Panc1 (cell line): ENCODE measurements at regions of chr1 and their contacts with region 1.

Region 1: GRCh38 chr1:236168716-236169429 is 26.5 kb downstream of the GPR137B start:
- DNase-seq: peak; percentile 92
- ATAC-seq: peak; percentile 76
- H3K4me3 ChIP-seq: no peak overlapping the region
- H3K27ac ChIP-seq: no peak overlapping the region
- H3K4me1 ChIP-seq: no peaks in the 10 kb centered on the region
- H3K27me3 ChIP-seq: no peaks in the 10 kb centered on the region
- CTCF ChIP-seq: no peak; the same call in 1 of the 2 replicates

Region 2: GRCh38 chr1:236156512-236157208 is 12.2 kb before region 1 on chr1:
- CTCF ChIA-PET with region 1: interaction called, 11 read pairs
- POLR2A ChIA-PET with region 1: no interaction called
- in situ Hi-C with region 1: no loop called
- intact Hi-C with region 1: no loop called
- DNase-seq: no peak
- ATAC-seq: no peak
- H3K4me3 ChIP-seq: no peak overlapping the region
- H3K27ac ChIP-seq: no peak overlapping the region
- H3K4me1 ChIP-seq: no peaks in the 10 kb centered on the region
- H3K27me3 ChIP-seq: no peaks in the 10 kb centered on the region
- CTCF ChIP-seq: no peak

Region 3: GRCh38 chr1:236228411-236228810 is 59.5 kb after region 1 on chr1:
- CTCF ChIA-PET with region 1: no interaction called
- POLR2A ChIA-PET with region 1: no interaction called
- in situ Hi-C with region 1: no loop called
- intact Hi-C with region 1: loop called (anchors 10 kb)
- DNase-seq: no peak
- ATAC-seq: no peak
- H3K4me3 ChIP-seq: no peak overlapping the region
- H3K27ac ChIP-seq: no peak overlapping the region
- H3K4me1 ChIP-seq: no peaks in the 10 kb centered on the region
- H3K27me3 ChIP-seq: no peaks in the 10 kb centered on the region
- CTCF ChIP-seq: no peak